Sciatic nerve (tissue), 2 donors: ENCODE measurements at regions of chr3 and their contacts with region 1.

Region 1: DNA sequence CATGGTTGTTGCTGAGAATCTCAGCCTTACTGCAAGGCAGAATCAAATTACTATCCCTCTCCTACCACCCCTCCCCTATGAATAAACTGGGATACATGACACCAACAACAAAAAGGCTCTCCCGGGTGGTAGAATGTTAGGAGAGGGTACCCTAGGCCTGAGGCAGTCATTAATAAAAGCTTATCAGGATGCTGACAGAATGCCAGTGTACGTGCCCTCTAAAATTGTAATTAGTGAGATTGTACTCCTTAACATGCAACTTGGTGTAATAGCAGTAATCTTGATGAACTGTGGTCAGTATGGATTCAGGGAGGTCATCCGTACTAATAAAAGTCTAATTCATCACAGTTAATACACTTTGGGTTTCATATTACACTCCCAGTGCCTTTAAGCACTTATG is 76.5 kb downstream of the B3GALNT1 start:
- DNase-seq: no peak
- ATAC-seq: no peak

Region 2: DNA sequence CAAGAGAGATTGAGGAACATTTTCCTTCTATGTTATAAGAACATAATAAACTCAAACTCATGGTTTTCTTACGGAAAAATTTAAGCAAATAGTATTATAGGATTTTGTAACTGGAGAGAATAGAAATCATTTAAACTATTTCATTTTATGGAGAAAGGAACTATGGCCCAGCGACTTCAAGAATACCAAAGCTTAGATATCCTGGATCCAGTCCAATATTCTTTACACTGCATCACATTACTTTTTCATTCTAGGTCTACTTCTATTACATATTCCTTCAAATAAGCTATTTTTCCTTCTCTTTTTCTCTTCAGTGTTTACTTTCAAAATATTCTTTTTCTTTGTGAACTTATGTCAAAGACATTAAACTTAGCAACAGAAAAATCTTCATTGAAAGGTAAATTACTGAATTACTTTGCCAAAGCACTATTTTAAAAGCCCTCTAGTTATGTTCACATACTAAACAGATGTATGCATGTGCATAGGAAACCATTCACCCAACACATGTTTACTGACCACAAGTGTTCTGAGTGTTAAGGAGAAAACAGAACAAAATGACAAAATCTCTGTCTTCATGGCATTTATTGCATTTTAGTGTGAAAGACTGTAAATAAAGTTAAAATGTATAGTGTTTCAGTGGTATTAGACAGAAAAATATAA is 483.6 kb before region 1 on chr3:
- intact Hi-C with region 1: no loop called
- DNase-seq: no peak
- ATAC-seq: no peak

Region 3: DNA sequence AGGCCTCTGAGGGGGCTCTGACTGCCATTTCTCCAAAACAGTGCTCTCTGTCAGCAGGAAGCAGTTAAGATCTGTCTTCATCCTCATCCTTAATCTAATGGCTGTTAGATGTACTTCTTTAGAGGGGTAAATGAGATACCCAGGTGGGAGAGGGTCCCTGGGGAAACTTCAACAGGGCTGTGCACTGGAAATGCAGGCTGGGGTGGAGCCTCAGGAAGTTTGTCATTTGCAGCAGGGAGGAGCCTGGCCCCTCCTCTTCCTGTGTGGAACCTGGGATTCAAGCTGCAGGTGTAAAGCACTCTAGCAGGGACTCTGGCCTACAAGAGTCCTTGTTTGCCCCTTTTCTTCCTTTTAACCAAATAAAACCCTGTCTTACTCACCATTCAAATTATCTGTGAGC is 1641.6 kb after region 1 on chr3:
- intact Hi-C with region 1: loop called (anchors 5 kb)
- DNase-seq: no peak
- ATAC-seq: no peak